Heart left ventricle (tissue), 16 donors: ENCODE measurements at regions of chr4 and their contacts with region 1.

Region 1: GRCh38 chr4:151879705-151880445 is 119.1 kb upstream of the GATB start:
- DNase-seq: no peak
- ATAC-seq: no peak
- H3K4me3 ChIP-seq: no peak overlapping the region
- H3K27ac ChIP-seq: no peak overlapping the region
- H3K4me1 ChIP-seq: no peaks in the 10 kb centered on the region
- H3K27me3 ChIP-seq: no peaks in the 10 kb centered on the region
- CTCF ChIP-seq: no peak
- POLR2A ChIP-seq: no peak

Region 2: GRCh38 chr4:151744614-151745013 is 135.3 kb before region 1 on chr4:
- intact Hi-C with region 1: no loop called
- DNase-seq: no peak
- ATAC-seq: peak in 2 of 4 donors; percentile 52 to 53
- H3K4me3 ChIP-seq: no peak overlapping the region
- H3K27ac ChIP-seq: peak overlapping the region in 6 of 12 donors; percentile 0 to 77 (median 19)
- H3K4me1 ChIP-seq: peaks cover 0 to 37% (median 6%) of the 10 kb centered on the region in 12 donors
- H3K27me3 ChIP-seq: no peaks in the 10 kb centered on the region
- CTCF ChIP-seq: no peak
- POLR2A ChIP-seq: no peak

Region 3: DNA sequence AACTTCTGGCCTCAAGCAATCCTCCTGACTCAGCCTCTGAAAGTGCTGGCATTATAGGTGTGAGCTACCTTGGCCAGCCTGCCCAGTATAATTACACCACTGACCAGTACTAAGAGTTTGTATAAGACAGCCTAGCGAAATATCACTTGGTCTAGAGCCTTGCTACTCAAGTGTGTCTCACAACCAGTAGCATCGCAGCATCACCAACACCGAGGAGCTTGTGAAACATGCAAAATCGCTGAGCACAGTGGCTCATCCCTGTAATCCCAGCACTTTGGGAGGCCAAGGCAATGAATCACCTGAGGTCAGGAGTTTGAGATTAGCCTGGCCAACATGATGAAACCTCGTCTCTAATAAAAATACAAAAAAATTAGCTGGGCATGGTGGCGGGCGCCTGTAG is 17.1 kb before region 1 on chr4:
- intact Hi-C with region 1: loop called in 1 of 10 experiments (anchors 1 kb)
- DNase-seq: no peak
- ATAC-seq: no peak
- H3K4me3 ChIP-seq: no peak overlapping the region
- H3K27ac ChIP-seq: no peak overlapping the region
- H3K4me1 ChIP-seq: peaks cover 0 to 28% (median 10%) of the 10 kb centered on the region in 12 donors
- H3K27me3 ChIP-seq: no peaks in the 10 kb centered on the region
- CTCF ChIP-seq: no peak
- POLR2A ChIP-seq: no peak

Region 4: DNA sequence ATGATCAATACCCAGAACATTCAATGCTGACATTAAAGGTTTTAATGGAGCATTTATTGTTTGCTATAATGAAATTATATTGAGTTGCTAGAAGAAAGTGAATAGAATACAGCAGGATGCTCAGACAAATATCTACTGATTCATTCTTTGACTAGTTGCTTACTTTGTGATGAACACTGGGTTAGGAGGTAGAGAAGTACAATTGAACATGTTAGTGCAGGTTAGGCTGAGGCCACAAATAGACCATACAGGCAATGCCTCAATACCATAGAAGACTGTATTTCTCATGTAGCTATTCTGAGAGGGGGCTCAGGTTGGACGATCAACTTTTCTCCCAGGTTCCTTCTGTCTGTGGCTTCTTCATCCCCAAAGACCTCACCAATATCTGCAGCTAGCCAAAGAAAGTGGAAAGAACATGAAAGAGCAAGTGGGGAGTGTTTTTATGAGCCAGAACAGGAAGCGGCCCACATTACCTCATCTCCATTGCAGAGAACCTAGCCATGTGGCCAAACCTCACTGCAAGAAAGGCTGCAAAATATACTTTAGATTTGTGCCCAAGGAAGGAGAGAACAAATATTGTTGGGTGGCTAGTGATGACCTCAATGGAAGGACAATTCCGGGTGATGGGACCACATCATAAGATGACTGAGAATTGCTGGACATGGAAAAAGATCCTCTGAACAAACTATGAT is 61.2 kb after region 1 on chr4:
- intact Hi-C with region 1: no loop called
- DNase-seq: no peak
- ATAC-seq: no peak
- H3K4me3 ChIP-seq: no peak overlapping the region
- H3K27ac ChIP-seq: no peak overlapping the region
- H3K4me1 ChIP-seq: no peaks in the 10 kb centered on the region
- H3K27me3 ChIP-seq: no peaks in the 10 kb centered on the region
- CTCF ChIP-seq: no peak
- POLR2A ChIP-seq: no peak

Region 5: DNA sequence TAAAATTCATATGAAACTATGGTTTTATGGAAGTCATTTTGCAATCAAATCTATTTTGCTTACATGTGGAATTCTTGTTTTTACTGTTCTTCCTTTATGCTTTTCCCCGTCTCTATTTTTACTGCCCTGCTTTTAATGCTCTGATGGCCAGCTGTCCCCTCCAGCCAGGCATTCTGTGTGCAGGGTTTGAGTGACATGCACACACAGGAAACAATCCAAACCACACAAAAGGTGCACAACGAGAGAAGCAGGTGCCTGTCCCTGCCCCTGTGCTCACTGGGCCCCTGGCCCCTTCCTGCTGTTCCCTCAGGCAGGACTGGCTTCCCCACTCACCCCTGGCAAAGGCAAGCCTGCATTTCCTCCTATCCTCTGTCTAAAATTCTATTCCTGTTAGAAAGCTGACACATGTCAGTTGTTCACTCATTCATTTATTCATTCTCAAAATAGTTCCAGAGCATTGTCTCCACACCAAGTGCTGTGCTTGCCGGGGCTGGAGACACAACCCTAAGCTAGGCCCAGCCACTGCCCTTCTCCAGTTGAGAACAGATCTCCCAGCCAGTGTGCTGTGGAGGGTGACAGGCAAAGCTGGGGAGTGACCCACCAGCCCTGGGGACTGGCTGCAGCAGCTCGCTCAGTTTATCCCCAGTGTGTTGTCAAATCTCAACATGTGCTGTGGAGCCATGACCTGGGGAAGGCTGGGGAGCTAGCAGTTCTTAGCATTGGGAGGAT is 309.7 kb after region 1 on chr4:
- intact Hi-C with region 1: no loop called
- DNase-seq: no peak
- ATAC-seq: peak in 1 of 4 donors; percentile 27
- H3K4me3 ChIP-seq: no peak overlapping the region
- H3K27ac ChIP-seq: no peak overlapping the region
- H3K4me1 ChIP-seq: peaks cover 0 to 13% (median 5%) of the 10 kb centered on the region in 12 donors
- H3K27me3 ChIP-seq: no peaks in the 10 kb centered on the region
- CTCF ChIP-seq: no peak
- POLR2A ChIP-seq: no peak